Activated T-helper 1 cell treated with anti-CD3 and anti-CD28 coated beads, Interleukin-12 subunit alpha, Interleukin-12 subunit beta, Interleukin-2, Interleukin-4 antibody, amounts not matched to agents 30 ng/mL and 10 ng/mL and 1 ng/mL, durations not matched to agents 14 hours and 24 hours and 36 hours (primary cell): ENCODE measurements at regions of chr11 and their contacts with region 1.

Region 1: GRCh38 chr11:119067371-119068222 is at the start of gene VPS11:
- DNase-seq: peak; percentile 98
- H3K4me3 Mint-ChIP-seq: peak within 1 kb of the TSS; percentile 96
- H3K27ac Mint-ChIP-seq: peak within 1 kb of the TSS; percentile 97
- H3K4me1 Mint-ChIP-seq: peaks cover 31% of the 10 kb centered on the region
- H3K27me3 Mint-ChIP-seq: peaks cover 2% of the 10 kb centered on the region
- total RNA-seq, gene VPS11: 23.5 and 24.0 TPM in 2 replicates

Region 2: DNA sequence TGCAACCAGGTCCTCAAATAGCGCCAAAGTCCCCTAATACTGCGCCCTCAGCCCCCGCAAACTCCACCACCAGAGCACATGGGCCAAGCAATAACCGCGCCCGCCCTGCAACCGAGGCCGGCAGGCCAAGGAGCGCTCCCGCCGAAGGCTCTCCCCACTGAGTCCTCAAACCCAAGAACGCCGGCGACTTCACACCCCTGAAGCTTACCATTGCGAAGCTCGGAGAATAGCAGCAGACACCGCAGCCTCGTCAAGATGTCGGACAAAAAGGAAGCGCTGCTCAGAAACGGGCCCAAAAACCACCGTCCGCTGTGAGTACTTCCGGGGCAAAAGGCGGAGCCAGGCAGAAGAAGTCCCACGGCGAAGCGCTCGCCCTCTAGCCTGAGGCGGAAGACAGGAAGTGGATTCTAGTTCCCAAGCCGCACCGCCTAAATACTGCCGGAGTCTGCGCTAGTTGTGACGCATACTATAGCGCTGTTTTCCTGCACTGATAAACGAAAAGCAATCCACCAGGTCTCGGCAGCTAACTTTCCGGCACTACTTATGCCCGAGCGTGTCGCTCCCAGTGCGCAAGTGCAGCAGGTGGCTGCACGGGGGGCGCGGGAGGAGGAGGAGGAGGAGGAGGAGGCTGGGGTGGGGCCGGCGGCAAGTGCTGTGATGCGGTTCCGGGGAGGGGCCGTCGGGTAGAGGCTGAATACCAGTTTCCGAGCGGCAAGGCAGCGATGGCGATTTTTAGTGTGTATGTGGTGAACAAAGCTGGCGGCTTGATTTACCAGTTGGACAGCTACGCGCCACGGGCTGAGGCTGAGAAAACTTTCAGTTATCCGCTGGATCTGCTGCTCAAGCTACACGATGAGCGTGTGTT is 49.3 kb before region 1 on chr11 and contains the starts of genes RPS25 and TRAPPC4:
- intact Hi-C with region 1: loop called (anchors 1 kb)
- DNase-seq: peak; percentile 92
- H3K4me3 Mint-ChIP-seq: peak within 1 kb of the TSS; percentile 99
- H3K27ac Mint-ChIP-seq: peak within 1 kb of the TSS; percentile 100
- H3K4me1 Mint-ChIP-seq: peaks cover 42% of the 10 kb centered on the region
- H3K27me3 Mint-ChIP-seq: no peaks in the 10 kb centered on the region
- total RNA-seq, gene RPS25: 1,440 and 1,455 TPM in 2 replicates
- total RNA-seq, gene TRAPPC4: 141 and 142 TPM in 2 replicates

Region 3: DNA sequence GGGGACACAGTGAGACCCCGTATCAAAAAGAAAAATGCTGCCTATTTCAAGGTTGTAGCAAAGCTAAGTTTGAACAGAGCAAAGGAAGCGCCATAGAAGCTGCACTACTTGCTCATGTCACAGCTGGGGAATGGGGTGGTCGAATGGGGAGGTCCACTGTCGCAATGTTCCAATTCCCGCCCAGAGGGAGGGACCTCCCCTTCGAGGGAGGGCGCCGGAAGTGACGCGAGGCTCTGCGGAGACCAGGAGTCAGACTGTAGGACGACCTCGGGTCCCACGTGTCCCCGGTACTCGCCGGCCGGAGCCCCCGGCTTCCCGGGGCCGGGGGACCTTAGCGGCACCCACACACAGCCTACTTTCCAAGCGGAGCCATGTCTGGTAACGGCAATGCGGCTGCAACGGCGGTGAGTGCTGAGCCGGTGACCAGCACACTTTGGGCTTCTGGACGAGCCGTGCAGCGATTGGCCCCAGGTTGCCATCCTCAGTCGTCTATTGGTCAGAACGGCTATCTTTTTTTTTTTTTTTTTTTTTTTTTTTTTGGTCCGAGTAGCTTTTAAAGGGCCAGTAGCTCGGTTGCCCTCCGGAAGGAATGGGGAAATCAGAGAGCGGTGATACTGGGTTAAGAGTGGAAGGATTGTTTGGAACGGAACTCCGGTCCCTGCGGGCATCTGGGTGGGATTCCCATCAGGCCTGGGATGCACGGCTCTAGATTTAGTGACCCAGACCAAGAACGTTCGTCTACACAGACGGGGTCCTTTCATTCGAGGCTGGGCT is 17.3 kb after region 1 on chr11 and contains the start of gene HMBS:
- intact Hi-C with region 1: loop called (anchors 1 kb)
- DNase-seq: peak; percentile 89
- H3K4me3 Mint-ChIP-seq: peak within 1 kb of the TSS; percentile 97
- H3K27ac Mint-ChIP-seq: peak within 1 kb of the TSS; percentile 92
- H3K4me1 Mint-ChIP-seq: peaks cover 39% of the 10 kb centered on the region
- H3K27me3 Mint-ChIP-seq: no peaks in the 10 kb centered on the region
- total RNA-seq, gene HMBS: 55.0 and 55.6 TPM in 2 replicates

Region 4: DNA sequence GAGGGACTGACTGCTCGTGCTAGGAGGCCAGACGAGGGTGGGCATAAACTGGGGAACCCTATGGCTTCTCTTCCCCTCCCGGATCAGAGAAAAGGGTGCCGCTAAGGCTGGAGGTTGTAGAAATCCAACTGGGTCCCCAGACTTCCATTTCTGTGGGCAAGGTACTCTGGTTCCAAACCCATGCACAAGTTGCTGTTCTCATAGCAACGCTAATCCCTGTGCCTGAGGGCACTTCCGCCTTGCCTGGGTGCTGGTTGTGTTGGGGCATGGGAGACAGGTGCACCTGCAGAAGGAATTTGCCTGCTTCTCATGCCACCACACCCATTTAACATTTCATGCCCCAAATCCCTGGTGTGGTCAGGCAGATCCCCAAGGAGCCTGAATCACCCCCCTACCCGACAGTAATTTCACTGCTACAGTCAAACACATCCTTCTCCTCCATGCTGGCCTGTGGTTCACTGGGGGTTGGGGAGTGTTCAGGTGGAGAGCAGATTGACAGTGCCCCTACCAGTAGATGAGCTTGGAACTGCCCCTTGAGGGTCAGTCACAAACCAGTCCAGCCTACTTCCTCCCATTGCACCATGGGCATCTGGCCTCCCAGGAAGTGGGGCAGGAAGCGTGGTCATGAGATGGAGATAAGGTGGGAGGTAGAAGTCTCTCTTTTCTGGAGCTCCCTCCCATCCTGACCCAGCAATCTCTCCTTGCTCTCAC is 40.7 kb after region 1 on chr11:
- intact Hi-C with region 1: loop called (anchors 1 kb)
- DNase-seq: no peak
- H3K4me3 Mint-ChIP-seq: peak overlapping the region; percentile 95
- H3K27ac Mint-ChIP-seq: peak overlapping the region; percentile 91
- H3K4me1 Mint-ChIP-seq: peaks cover 52% of the 10 kb centered on the region
- H3K27me3 Mint-ChIP-seq: no peaks in the 10 kb centered on the region

Region 5: DNA sequence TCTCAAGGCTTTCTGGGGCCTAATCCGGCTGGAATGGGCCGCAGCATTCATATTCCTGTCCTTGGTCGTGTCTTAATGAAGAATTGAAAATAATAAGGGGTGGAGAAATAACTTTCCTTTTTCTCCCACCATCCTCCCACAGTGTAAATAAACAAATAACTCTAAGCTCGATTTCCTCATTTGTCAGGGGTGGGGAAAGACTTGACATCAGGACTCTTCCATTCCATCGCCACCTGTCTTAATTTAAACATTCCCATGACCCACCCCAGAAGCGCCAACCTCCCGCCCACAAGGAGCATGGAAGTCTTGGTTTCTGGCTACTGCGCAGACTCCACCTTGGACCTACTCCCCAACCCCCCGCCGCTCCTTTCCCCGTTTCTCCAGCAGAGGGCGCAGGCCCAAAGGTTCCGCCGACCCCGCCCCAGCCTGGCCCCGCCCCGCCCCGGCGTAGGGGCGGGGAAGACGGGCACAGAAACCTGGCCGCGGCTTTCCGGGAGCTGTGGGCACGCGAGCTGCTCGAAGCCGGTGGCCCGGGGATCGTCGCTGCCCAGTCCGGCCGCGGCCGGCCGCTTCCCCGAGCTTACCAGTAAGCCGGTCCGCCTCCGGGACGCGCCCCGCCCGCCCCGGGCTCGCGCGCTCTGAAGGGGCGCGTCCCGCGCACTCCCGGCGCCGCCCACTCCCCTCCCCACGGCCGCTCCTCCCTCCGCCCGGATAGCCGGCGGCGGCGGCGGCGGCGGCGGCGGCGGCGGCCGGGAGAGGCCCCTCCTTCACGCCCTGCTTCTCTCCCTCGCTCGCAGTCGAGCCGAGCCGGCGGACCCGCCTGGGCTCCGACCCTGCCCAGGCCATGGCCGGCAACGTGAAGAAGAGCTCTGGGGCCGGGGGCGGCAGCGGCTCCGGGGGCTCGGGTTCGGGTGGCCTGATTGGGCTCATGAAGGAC is 138.2 kb after region 1 on chr11 and contains the start of gene CBL:
- intact Hi-C with region 1: loop called (anchors 2 kb)
- DNase-seq: peak; percentile 89
- H3K4me3 Mint-ChIP-seq: peak within 1 kb of the TSS; percentile 98
- H3K27ac Mint-ChIP-seq: peak within 1 kb of the TSS; percentile 97
- H3K4me1 Mint-ChIP-seq: peaks cover 28% of the 10 kb centered on the region
- H3K27me3 Mint-ChIP-seq: no peaks in the 10 kb centered on the region
- total RNA-seq, gene CBL: 38.1 and 39.9 TPM in 2 replicates